Dorsolateral prefrontal cortex (tissue), 120 donors: ENCODE measurements at regions of chr5 and their contacts with region 1.

Region 1: DNA sequence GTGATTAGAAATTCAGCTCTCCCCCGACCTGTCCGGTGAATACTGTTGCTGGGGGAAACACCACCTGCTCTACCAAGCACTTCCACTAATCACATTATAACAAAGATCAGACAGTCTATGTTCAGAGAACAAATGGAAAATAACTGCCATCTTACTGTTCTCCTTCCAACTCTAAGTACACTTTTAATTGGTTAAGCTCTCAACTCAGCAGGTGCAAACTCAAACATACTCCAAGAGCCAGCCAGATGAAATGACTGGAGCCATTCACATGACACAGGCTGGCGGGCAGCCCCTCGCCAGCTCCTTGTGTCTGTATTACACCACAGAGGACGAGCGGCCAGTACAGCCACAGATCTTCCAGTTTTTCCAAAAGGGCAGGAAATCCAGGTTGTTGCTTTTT is 16.1 kb downstream of the LIFR start:
- DNase-seq: peak in 7 of 10 donors; percentile 53 to 69 (median 60)
- H3K4me3 ChIP-seq: peak overlapping the region in 13 of 59 donors; percentile 0 to 29 (median 9)
- H3K27ac ChIP-seq: peak overlapping the region in 41 of 59 donors; percentile 2 to 74 (median 41)
- H3K27me3 ChIP-seq: no peaks in the 10 kb centered on the region
- CTCF ChIP-seq: peak in 5 of 56 donors; percentile 10 to 21 (median 18)

Region 2: DNA sequence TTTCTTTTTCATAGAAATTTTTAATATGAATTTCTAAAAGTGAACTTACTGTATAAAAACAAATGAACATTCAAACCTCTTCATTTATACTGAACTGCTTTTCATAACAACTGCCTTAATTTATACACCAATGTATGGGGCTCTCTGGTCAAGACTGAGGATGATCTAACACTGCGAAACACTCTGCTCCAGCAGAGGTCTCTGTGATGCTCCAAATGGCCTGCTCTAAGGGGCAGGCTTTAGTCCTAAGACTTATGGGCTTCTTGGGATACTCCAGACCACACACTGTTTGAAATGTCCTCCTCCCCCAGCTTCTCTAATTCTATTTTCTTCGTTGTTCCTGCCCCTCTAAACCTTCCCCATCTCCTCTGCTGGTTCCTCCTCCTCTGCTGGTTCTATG is 42.4 kb before region 1 on chr5:
- intact Hi-C with region 1: loop called in 1 of 2 experiments (anchors 5 kb)
- DNase-seq: no peak
- H3K4me3 ChIP-seq: no peak overlapping the region
- H3K27ac ChIP-seq: peak overlapping the region in 1 of 59 donors; percentile 7
- H3K27me3 ChIP-seq: no peaks in the 10 kb centered on the region
- CTCF ChIP-seq: peak in 43 of 56 donors; percentile 14 to 65 (median 34)